ENCODE measurements at regions of chr11 and their contacts with region 1.

Region 1: GRCh38 chr11:93741094-93741881 is at the starts of genes C11orf54 and TAF1D:
- DNase-seq: peak; percentile 97
- ATAC-seq: peak; percentile 97
- total RNA-seq, gene C11orf54: 36.4 TPM
- total RNA-seq, gene TAF1D: 36.1 TPM

Region 2: GRCh38 chr11:93784152-93784934 is 43.1 kb after region 1 on chr11 and contains the start of gene MED17:
- intact Hi-C with region 1: loop called (anchors 5 kb)
- DNase-seq: peak; percentile 93
- ATAC-seq: peak; percentile 100
- total RNA-seq, gene MED17: 20.3 TPM

Measured in left ventricle myocardium superior (tissue), 1 donor.